ENCODE measurements at regions of chr12 and their contacts with region 1.

Region 1: GRCh38 chr12:57111031-57111734 is at the start of gene STAT6:
- DNase-seq: peak; percentile 71
- ATAC-seq: peak; percentile 66
- H3K4me3 ChIP-seq: peak within 1 kb of the TSS; percentile 72 to 91 (median 87)
- H3K27ac ChIP-seq: peak within 1 kb of the TSS; percentile 82
- H3K4me1 ChIP-seq: peaks cover 46% of the 10 kb centered on the region
- H3K27me3 ChIP-seq: no peaks in the 10 kb centered on the region; a peak in 1 of 5 replicates
- CTCF ChIP-seq: no peak
- EP300 ChIP-seq: no peak; a peak in 1 of 4 replicates
- POLR2A ChIP-seq: peak in 1 of 2 experiments; percentile 55; a peak in 1 of 4 replicates
- RAD21 ChIP-seq: no peak
- total RNA-seq, gene STAT6: 19.4 and 28.0 TPM in 2 replicates

Region 2: GRCh38 chr12:57063991-57064685 is 47.0 kb before region 1 on chr12:
- CTCF ChIA-PET with region 1: interaction called, 76 read pairs
- POLR2A ChIA-PET with region 1: interaction called, 118 read pairs
- in situ Hi-C with region 1: no loop called
- intact Hi-C with region 1: loop called (anchors 1 kb)
- DNase-seq: no peak
- ATAC-seq: no peak
- H3K4me3 ChIP-seq: no peak overlapping the region
- H3K27ac ChIP-seq: no peak overlapping the region
- H3K4me1 ChIP-seq: no peaks in the 10 kb centered on the region
- H3K27me3 ChIP-seq: no peaks in the 10 kb centered on the region
- CTCF ChIP-seq: no peak
- EP300 ChIP-seq: no peak
- POLR2A ChIP-seq: no peak
- RAD21 ChIP-seq: no peak

Region 3: GRCh38 chr12:57088459-57089248 is 22.5 kb before region 1 on chr12 and contains the start of gene NAB2:
- CTCF ChIA-PET with region 1: interaction called, 5 read pairs
- POLR2A ChIA-PET with region 1: interaction called, 309 read pairs
- in situ Hi-C with region 1: no loop called
- intact Hi-C with region 1: loop called (anchors 2 kb)
- DNase-seq: peak; percentile 95
- ATAC-seq: peak; percentile 80
- H3K4me3 ChIP-seq: peak within 1 kb of the TSS; percentile 83 to 93 (median 84)
- H3K27ac ChIP-seq: peak within 1 kb of the TSS; percentile 88
- H3K4me1 ChIP-seq: peaks cover 28% of the 10 kb centered on the region
- H3K27me3 ChIP-seq: no peaks in the 10 kb centered on the region; a peak in 1 of 5 replicates
- CTCF ChIP-seq: 0 out of 2 replicates have a peak, but pooled peaks have one; percentile 11
- EP300 ChIP-seq: peak; percentile 21 to 73; a peak in 3 of 4 replicates
- POLR2A ChIP-seq: peak; percentile 64 to 89
- RAD21 ChIP-seq: peak; percentile 16; the same call in 1 of the 2 replicates
- total RNA-seq, gene NAB2: 11.0 and 11.7 TPM in 2 replicates

Region 4: GRCh38 chr12:57135527-57136326 is 24.5 kb after region 1 on chr12:
- CTCF ChIA-PET with region 1: no interaction called
- POLR2A ChIA-PET with region 1: interaction called, 20 read pairs
- in situ Hi-C with region 1: no loop called
- intact Hi-C with region 1: no loop called
- DNase-seq: no peak
- ATAC-seq: no peak
- H3K4me3 ChIP-seq: no peak overlapping the region
- H3K27ac ChIP-seq: peak overlapping the region; percentile 42
- H3K4me1 ChIP-seq: peaks cover 100% of the 10 kb centered on the region
- H3K27me3 ChIP-seq: no peaks in the 10 kb centered on the region
- CTCF ChIP-seq: no peak
- EP300 ChIP-seq: no peak
- POLR2A ChIP-seq: no peak
- RAD21 ChIP-seq: no peak

Region 5: GRCh38 chr12:57182921-57183790 is 72.0 kb after region 1 on chr12:
- CTCF ChIA-PET with region 1: interaction called, 7 read pairs
- POLR2A ChIA-PET with region 1: interaction called, 10 read pairs
- in situ Hi-C with region 1: no loop called
- intact Hi-C with region 1: no loop called
- DNase-seq: peak; percentile 39
- ATAC-seq: peak; percentile 82
- H3K4me3 ChIP-seq: no peak overlapping the region
- H3K27ac ChIP-seq: no peak overlapping the region
- H3K4me1 ChIP-seq: no peaks in the 10 kb centered on the region
- H3K27me3 ChIP-seq: no peaks in the 10 kb centered on the region
- CTCF ChIP-seq: peak; percentile 95
- EP300 ChIP-seq: no peak
- POLR2A ChIP-seq: no peak
- RAD21 ChIP-seq: peak; percentile 90